Activated naive CD4-positive, alpha-beta T cell treated with anti-CD3 and anti-CD28 coated beads for 36 hours (primary cell): ENCODE measurements at regions of chr16 and their contacts with region 1.

Region 1: DNA sequence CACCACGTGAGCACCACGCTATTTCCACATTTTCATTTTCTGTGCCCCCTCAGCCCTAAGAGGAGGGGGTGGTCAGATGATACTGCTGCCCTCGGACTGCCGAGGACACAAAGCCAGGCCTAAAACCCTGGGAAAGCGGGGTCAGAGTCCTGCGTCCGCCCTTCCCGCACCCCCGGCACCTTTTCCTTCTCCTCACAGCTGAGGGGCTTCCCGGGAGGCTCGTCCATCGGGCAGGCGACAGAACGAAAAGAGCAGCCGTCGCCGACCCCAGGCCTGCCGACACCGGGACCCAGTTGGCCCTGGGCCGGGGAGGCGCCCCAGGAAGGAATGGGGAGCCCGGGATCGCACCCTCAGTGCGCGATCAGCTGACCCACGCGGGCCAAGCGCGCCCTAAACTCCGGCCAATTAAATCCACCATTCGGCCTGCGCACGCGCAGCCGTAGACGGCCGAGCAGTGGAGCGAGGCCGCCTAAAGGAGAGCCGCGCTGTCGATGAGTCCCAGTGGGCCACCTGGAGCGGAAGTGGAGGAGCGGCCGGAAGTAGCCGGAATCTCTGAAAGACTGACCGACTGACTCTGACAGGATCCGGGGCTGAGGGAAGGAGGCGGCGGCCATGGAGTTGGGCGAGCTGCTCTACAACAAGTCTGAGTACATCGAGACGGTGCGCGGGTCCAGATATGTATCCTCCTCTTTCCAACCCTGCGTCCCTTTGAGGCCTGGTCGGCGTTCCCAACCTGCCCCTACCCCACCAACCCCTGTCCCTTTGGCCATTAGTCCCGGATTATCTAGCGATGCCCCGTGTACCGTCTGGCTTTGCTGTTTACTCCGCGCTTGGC is at the starts of genes DCTN5 and PALB2:
- DNase-seq: peak; percentile 93
- H3K4me3 Mint-ChIP-seq: peak within 1 kb of the TSS; percentile 100
- H3K27ac Mint-ChIP-seq: peak within 1 kb of the TSS; percentile 97
- H3K4me1 Mint-ChIP-seq: peaks cover 33% of the 10 kb centered on the region
- H3K27me3 Mint-ChIP-seq: no peaks in the 10 kb centered on the region
- total RNA-seq, gene DCTN5: 57.5 to 60.7 TPM
- total RNA-seq, gene PALB2: 17.8 to 18.1 TPM

Region 2: DNA sequence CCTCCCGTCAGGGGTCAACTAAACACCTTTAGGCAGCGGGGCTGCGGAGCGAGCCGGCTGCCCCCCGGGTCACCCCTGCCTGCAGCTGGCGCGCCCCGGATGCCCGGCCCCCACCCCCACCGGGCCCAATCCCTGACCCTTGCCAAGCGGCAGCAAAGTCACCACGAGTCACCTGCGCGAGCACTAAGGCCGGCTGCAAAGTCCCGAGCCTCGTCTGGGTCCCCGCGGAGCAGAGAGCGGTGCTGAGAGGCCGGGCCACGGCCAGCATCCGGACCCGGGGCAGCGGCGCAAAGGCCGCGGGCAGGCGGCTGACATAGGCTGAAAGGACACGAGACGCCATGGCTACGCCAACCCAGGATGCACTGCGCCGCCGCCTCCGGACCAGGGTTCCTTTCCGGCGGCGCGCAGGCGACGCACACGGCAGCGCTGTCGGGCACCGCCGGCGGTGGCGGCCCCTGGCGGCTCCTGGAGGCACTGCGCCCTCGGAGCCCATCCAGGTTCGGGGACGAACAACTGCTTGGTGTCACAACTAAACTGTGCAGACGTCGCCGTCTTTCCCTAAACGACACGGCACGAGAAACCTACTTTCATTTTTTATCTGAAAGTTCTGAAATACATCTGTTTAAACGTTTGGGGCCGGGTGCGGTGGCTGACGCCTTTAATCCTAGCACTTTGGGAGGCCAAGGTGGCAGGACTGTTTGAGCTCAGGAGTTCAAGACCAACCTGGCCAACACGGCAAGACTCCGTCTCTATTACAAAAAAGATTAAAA is 45.0 kb before region 1 on chr16 and contains the start of gene NDUFAB1:
- CTCF ChIA-PET with region 1: interaction called, 3 read pairs
- intact Hi-C with region 1: loop called (anchors 1 kb)
- DNase-seq: peak; percentile 93
- H3K4me3 Mint-ChIP-seq: peak within 1 kb of the TSS; percentile 79
- H3K27ac Mint-ChIP-seq: peak within 1 kb of the TSS; percentile 76
- H3K4me1 Mint-ChIP-seq: peaks cover 39% of the 10 kb centered on the region
- H3K27me3 Mint-ChIP-seq: no peaks in the 10 kb centered on the region
- total RNA-seq, gene NDUFAB1: 163 to 170 TPM

Region 3: GRCh38 chr16:23670137-23670776 is 29.1 kb after region 1 on chr16:
- CTCF ChIA-PET with region 1: no interaction called
- intact Hi-C with region 1: loop called (anchors 1 kb)
- DNase-seq: peak; percentile 82
- H3K4me3 Mint-ChIP-seq: no peak overlapping the region
- H3K27ac Mint-ChIP-seq: peak overlapping the region; percentile 13
- H3K4me1 Mint-ChIP-seq: peaks cover 16% of the 10 kb centered on the region
- H3K27me3 Mint-ChIP-seq: no peaks in the 10 kb centered on the region

Region 4: DNA sequence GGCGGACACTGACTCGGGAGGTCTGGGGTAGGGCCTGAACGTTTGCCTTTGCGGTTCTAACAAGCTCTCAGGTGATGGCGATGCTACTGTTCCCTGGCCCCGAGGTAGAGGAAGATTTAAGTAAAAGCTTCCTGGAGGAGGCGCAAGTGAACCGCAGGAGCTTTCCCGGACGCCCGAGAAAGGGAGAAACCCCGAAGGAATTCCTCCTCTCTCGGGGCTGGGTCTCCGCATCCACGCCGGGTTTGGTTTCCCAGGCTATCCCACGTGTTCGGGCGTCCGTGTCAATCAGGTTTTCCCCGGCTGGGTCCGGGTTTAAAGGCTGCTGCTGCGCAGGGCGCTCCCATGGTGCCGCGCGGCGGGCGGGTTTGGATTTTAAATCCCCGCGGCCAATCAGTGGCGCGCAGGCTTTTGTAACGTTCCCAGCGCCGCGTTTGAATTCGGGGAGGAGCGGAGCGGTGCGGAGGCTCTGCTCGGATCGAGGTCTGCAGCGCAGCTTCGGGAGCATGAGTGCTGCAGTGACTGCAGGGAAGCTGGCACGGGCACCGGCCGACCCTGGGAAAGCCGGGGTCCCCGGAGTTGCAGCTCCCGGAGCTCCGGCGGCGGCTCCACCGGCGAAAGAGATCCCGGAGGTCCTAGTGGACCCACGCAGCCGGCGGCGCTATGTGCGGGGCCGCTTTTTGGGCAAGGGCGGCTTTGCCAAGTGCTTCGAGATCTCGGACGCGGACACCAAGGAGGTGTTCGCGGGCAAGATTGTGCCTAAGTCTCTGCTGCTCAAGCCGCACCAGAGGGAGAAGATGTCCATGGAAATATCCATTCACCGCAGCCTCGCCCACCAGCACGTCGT is 37.5 kb after region 1 on chr16 and contains the start of gene PLK1:
- CTCF ChIA-PET with region 1: no interaction called
- intact Hi-C with region 1: loop called (anchors 1 kb)
- DNase-seq: peak; percentile 90
- H3K4me3 Mint-ChIP-seq: peak within 1 kb of the TSS; percentile 89
- H3K27ac Mint-ChIP-seq: peak within 1 kb of the TSS; percentile 30
- H3K4me1 Mint-ChIP-seq: peaks cover 16% of the 10 kb centered on the region
- H3K27me3 Mint-ChIP-seq: peaks cover 3% of the 10 kb centered on the region
- total RNA-seq, gene PLK1: 91.8 to 98.0 TPM

Region 5: GRCh38 chr16:23729503-23730424 is 88.6 kb after region 1 on chr16:
- CTCF ChIA-PET with region 1: no interaction called
- intact Hi-C with region 1: no loop called
- DNase-seq: no peak
- H3K4me3 Mint-ChIP-seq: no peak overlapping the region
- H3K27ac Mint-ChIP-seq: no peak overlapping the region
- H3K4me1 Mint-ChIP-seq: peaks cover 3% of the 10 kb centered on the region
- H3K27me3 Mint-ChIP-seq: peaks cover 12% of the 10 kb centered on the region